Ovary (tissue), 10 donors: ENCODE measurements at regions of chr13 and their contacts with region 1.

Region 1: DNA sequence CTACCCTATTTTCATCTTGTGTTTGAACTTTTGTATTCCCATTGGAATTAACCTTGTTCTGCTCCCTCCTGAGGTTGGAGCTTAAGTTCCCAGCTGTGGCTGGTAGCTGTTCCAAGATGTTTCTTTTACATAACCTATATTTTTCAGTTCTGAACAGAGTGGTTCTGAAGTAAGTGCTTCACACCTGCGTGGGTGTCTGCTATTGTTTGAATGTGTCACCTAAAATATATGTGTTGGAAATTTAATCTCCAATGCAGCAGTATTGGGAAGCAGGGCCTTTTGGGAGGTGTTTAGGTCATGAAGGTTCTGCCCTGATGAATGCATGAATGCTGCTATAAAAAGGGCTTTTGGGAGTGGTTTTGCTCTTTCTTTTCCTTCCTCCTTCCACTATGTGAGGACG is 123.8 kb downstream of the LACC1 start:
- DNase-seq: no peak
- H3K4me3 ChIP-seq: no peak overlapping the region
- H3K27ac ChIP-seq: no peak overlapping the region
- H3K4me1 ChIP-seq: no peaks in the 10 kb centered on the region
- H3K27me3 ChIP-seq: no peaks in the 10 kb centered on the region
- CTCF ChIP-seq: no peak
- EP300 ChIP-seq: no peak
- POLR2A ChIP-seq: no peak

Region 2: GRCh38 chr13:43411741-43412140 is 591.7 kb before region 1 on chr13:
- intact Hi-C with region 1: no loop called
- DNase-seq: peak; percentile 53 to 65 (median 61)
- H3K4me3 ChIP-seq: no peak overlapping the region
- H3K27ac ChIP-seq: peak overlapping the region in 1 of 2 donors; percentile 37
- H3K4me1 ChIP-seq: no peaks in the 10 kb centered on the region
- H3K27me3 ChIP-seq: no peaks in the 10 kb centered on the region
- CTCF ChIP-seq: no peak
- EP300 ChIP-seq: no peak
- POLR2A ChIP-seq: no peak

Region 3: DNA sequence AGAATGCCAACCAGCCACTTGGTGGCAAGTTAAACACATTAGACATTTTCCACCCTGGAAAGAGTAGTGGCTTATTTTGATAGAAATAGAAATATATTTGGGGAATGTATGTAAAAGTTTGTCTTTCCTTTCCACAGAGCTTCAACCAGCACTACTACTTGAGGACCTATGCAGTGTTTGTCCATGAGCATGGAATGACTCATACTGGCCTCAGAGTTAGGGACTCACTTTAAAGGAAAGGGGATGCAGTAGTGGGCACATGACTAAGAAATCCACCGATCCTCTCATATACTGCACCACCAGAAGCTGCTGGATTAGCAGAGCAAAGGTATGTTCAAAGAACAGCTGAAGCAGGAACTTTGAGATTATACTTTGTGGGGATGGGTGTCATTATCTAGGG is 61.2 kb before region 1 on chr13:
- intact Hi-C with region 1: loop called in 1 of 4 experiments (anchors 2 kb)
- DNase-seq: no peak
- H3K4me3 ChIP-seq: no peak overlapping the region
- H3K27ac ChIP-seq: no peak overlapping the region
- H3K4me1 ChIP-seq: no peaks in the 10 kb centered on the region
- H3K27me3 ChIP-seq: no peaks in the 10 kb centered on the region
- CTCF ChIP-seq: no peak
- EP300 ChIP-seq: no peak
- POLR2A ChIP-seq: no peak

Region 4: DNA sequence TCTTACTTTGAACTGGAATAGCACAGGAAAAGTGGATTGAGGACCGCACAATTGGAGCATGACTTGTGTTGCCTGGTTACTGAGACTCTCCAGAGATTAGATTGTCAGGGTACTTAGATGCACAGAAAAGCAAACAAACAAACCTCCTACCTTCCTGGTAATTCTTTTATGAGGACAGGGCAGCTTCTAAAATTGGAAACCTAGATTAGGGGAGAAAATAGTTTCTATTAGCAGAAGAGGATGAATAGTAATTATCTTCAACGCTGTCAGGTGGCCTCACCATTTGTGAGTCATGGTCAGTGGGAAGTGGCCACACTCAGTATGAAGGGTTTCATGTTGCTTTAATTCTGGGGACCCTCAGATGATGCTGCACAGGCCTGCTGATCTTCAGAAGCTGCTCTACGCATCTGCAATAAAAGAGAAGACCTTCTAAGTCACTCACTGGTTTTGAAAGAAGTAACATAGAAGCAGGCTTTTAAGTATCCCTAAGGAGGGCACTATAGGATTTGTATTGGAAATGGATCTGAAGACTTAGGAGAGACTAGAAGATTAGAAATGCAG is 17.0 kb before region 1 on chr13:
- intact Hi-C with region 1: no loop called
- DNase-seq: no peak
- H3K4me3 ChIP-seq: no peak overlapping the region
- H3K27ac ChIP-seq: no peak overlapping the region
- H3K4me1 ChIP-seq: no peaks in the 10 kb centered on the region
- H3K27me3 ChIP-seq: no peaks in the 10 kb centered on the region
- CTCF ChIP-seq: no peak
- EP300 ChIP-seq: no peak
- POLR2A ChIP-seq: no peak